Aorta (tissue), 5 donors: ENCODE measurements at regions of chr12 and their contacts with region 1.

Region 1: GRCh38 chr12:63260705-63261104 is 109.7 kb upstream of the AVPR1A start:
- DNase-seq: no peak
- ATAC-seq: no peak
- H3K4me3 ChIP-seq: no peak overlapping the region
- H3K27ac ChIP-seq: no peak overlapping the region
- H3K4me1 ChIP-seq: no peaks in the 10 kb centered on the region
- H3K27me3 ChIP-seq: no peaks in the 10 kb centered on the region

Region 2: DNA sequence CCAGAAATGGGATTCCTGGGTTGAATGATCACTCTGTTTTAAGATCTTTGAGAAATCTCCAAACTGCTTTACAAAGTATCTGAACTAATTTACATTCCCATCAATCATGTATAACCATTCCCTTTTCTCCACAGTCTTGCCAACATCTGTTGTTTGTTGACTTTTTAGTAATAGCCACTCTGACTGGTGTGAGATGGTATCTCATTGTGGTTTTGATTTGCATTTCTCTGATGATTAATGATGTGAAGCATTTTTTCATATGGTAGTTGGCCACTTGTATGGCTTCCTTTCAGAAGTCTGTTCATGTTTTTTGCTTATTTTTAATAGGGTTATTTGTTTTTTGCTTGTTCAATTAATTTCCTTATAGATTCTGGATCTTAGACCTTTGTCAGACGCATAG is 102.1 kb after region 1 on chr12:
- intact Hi-C with region 1: loop called in 1 of 2 experiments (anchors 10 kb)
- DNase-seq: no peak
- ATAC-seq: no peak
- H3K4me3 ChIP-seq: no peak overlapping the region
- H3K27ac ChIP-seq: no peak overlapping the region
- H3K4me1 ChIP-seq: no peaks in the 10 kb centered on the region
- H3K27me3 ChIP-seq: no peaks in the 10 kb centered on the region